AG04449 (cell line): ENCODE measurements at regions of chr12 and their contacts with region 1.

Region 1: DNA sequence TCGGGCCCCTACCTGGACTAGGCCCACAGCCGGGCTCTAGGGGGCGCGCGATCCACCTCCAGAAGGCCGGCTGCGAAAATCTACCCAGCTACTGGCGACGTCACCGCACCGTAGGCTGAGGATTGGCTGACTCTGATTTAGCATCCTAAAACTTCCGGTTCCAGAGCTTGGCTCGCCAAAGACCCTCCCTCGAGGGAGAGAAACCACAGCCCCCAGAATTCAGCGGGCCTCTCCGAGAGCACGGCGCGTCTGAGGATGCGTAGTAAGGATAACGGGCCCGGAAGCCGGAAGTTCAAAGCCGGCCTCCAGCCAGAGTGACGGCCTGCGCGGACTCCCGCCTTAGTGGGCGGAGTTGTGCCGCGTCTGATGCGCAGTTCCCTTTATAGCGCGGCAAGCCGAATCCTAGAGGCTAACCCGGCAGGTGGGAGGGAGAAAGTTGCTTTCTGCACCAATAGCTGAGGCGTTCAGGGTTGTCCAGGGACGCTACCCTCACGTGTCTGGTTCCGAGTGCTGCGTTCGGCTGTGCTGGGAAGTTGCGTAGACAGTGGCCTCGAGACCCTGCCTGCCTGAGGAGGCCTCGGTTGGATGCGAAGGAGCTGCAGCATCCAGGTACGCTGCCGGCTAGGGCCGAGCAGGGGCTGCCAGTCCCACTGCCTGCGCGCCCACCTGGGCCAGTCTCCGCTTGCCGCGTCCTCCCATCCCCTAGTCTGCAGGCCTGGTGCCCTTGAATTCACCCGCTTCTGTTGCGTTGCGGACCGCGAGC is at the start of gene COX14:
- DNase-seq: peak; percentile 97
- H3K4me3 ChIP-seq: peak within 1 kb of the TSS; percentile 98
- CTCF ChIP-seq: peak; percentile 96

Region 2: DNA sequence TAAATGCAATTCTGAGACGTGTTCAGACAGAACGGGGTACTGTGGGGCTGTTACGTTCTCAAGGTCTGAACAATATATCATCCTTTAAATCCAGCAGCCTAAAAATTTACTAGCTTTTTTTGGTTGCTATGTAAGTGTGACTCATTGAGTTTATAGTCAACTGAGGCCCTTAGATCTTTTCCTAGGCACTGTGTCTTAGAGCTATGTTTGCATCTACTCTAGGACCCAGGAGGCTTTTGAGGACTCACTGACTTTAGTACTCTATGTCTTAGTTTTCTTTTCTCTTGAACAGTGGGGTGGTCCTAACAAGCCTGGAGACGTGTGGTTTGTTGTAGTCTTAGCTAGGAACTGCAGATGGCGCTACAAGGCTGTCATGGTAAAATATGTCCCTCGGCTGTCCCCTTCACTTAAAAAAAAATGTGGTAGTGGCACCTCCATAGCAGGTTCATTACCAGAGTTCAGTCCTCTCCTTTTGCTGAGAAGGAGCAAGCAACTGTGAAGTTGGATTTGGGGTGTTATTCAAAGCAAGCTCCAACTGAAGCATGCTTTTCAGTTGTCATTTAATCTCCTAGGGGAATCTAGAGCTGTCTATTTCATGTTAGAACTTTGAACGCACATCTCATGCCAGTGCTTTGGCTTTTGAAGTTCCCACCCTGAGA is 753.3 kb before region 1 on chr12:
- CTCF ChIA-PET with region 1: no interaction called
- POLR2A ChIA-PET with region 1: no interaction called
- DNase-seq: no peak
- H3K4me3 ChIP-seq: no peak overlapping the region
- CTCF ChIP-seq: peak; percentile 59

Region 3: GRCh38 chr12:50066433-50066832 is 45.4 kb before region 1 on chr12:
- CTCF ChIA-PET with region 1: interaction called, 24 read pairs
- POLR2A ChIA-PET with region 1: no interaction called
- DNase-seq: peak; percentile 84
- H3K4me3 ChIP-seq: no peak overlapping the region
- CTCF ChIP-seq: no peak

Region 4: DNA sequence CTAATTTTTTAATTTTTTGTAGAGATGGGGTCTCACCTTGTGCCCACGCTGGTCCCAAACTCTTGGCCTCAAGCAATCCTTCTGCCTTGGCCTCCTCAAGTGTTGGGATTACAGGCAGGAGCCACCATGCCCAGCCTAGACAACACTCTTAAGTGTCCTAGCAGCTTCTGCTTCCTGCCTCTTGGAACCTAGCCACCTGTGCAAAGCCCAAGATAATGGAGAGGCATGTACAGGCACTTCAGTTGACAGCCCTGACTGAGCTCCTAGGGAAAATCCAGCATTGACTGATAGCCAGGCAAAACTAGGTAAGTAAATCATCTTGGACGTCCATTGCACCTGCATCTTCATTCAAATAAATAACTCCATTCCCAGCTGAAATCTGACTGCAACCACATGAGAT is 15.7 kb after region 1 on chr12:
- CTCF ChIA-PET with region 1: interaction called, 48 read pairs
- POLR2A ChIA-PET with region 1: interaction called, 7 read pairs
- DNase-seq: no peak
- H3K4me3 ChIP-seq: no peak overlapping the region
- CTCF ChIP-seq: no peak

Region 5: DNA sequence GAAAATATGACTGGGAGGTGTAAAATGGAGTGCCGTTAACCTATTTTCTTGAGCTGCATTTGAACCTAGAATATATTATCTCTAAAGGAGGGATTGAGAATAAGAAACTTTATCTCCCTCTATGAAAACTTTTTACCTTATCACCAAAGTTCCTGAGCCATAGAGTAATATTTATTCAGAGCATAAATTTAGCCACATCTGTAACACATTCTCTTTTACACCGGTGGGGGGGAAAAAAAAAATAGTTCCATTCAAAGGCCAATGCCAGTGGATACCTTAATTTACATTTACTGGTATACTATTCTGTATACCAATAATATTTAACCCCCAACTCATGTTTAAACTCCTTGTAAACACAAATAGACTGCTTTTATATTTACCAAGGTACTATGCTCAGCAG is 33.6 kb after region 1 on chr12:
- CTCF ChIA-PET with region 1: interaction called, 19 read pairs
- POLR2A ChIA-PET with region 1: interaction called, 3 read pairs
- DNase-seq: no peak
- H3K4me3 ChIP-seq: no peak overlapping the region
- CTCF ChIP-seq: no peak

Region 6: GRCh38 chr12:50174971-50175715 is 63.3 kb after region 1 on chr12:
- CTCF ChIA-PET with region 1: interaction called, 36 read pairs
- POLR2A ChIA-PET with region 1: no interaction called
- DNase-seq: no peak
- H3K4me3 ChIP-seq: no peak overlapping the region
- CTCF ChIP-seq: peak; percentile 2